BJ (cell line): ENCODE measurements at regions of chr5 and their contacts with region 1.

Region 1: DNA sequence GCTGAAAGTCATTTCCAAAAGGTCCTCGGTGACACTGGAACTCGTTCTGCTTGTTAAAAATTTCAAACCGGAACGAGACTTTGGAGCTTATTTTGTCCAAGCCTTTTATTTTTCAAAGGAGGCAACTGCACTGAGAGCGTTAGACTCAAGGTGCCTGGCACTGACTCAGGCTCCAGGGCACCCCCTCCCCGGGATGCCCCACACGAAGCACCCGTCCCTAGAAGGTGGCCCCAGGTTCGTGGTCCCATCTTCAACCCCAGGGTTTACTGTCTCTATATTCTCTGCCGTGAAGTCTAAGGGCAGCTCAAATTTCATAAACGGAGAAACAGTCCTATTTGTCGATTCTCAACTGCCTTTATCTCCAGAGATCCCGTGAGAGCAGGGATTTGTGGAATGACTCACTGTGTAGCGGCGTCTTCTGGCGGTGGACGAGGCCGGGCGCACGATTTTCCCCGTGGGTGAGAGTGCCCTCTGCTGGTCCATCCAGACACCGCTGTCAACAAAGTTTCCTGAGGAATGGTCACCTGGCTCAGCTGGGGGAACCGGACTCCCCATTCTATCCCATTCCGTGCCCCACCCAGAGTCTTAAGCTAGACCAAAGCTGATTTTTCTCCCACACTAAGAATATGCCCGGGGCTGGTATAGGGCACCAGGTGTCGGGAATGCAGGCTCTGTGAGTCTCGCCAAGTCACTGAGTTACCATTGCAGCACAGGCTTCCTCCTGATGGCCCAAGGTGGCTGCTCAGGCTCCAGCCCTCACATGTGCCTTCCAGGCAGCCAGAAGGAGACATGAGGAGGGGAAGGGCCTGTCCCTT is 27.1 kb upstream of the SLC6A19 start:
- DNase-seq: peak; percentile 25
- H3K4me3 ChIP-seq: no peak overlapping the region
- H3K27me3 ChIP-seq: no peaks in the 10 kb centered on the region
- CTCF ChIP-seq: peak; percentile 85

Region 2: GRCh38 chr5:945691-946551 is 228.4 kb before region 1 on chr5:
- CTCF ChIA-PET with region 1: interaction called, 10 read pairs
- POLR2A ChIA-PET with region 1: no interaction called
- DNase-seq: no peak
- H3K4me3 ChIP-seq: no peak overlapping the region
- H3K27me3 ChIP-seq: peaks cover 48% of the 10 kb centered on the region
- CTCF ChIP-seq: no peak

Region 3: GRCh38 chr5:1125030-1125357 is 49.3 kb before region 1 on chr5:
- CTCF ChIA-PET with region 1: no interaction called
- POLR2A ChIA-PET with region 1: no interaction called
- DNase-seq: peak; percentile 30
- H3K4me3 ChIP-seq: no peak overlapping the region
- H3K27me3 ChIP-seq: peaks cover 14% of the 10 kb centered on the region
- CTCF ChIP-seq: no peak